ENCODE measurements at regions of chr6 and their contacts with region 1.

Region 1: DNA sequence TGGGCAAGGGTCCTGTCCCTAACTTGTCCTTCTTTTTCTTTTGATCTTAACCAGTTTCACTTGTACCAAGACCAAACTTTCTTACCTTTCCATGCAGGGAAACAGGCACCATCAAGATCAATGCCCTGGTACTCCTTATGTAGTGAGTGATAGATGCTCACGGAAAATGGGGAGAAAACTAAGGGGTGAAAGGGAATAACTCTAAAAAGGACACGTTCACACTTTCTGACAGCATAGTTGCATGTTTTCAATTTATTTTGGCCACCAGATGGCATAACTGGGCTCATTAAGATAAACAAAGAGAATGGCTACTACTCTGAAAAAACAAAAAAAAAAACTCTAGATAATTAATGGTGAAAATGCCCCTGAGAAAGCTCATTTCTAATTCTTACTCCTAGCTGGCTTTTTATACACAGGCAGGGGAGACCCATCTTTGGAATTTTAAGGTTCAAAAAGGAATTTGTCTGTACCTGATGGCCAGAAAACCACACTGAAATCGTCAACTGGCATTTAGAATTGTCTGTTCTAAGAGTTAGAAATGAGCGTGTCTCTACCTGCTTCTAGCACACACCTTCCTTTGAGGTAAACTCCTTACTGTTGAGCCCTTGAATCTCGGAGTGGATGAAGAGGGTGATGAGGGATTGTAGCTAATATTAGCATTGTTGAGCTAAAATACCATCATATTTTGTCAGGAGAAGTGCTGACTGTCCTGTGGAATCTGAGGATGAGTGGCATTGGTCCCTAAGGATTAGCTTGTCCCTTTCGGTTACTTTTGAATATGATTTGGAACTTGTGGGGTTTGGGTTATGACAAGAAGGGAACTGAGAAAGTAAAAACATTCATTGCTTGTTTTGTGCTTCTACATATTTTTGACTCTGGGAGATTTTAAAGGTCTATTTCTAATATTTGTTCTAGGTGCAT is 62.2 kb upstream of the DDR1 start:
- DNase-seq: no peak
- ATAC-seq: peak; percentile 20; the same call in 1 of the 2 replicates
- H3K4me3 ChIP-seq: no peak overlapping the region
- H3K27ac ChIP-seq: peak overlapping the region; percentile 97
- H3K4me1 ChIP-seq: peaks cover 58 to 72% of the 10 kb centered on the region in 2 experiments
- H3K27me3 ChIP-seq: no peaks in the 10 kb centered on the region
- CTCF ChIP-seq: peak in 2 of 3 experiments; percentile 44 to 57; a peak in 3 of 6 replicates
- POLR2A ChIP-seq: no peak
- RAD21 ChIP-seq: no peak

Region 2: GRCh38 chr6:30672445-30673253 is 149.5 kb before region 1 on chr6 and contains the start of gene DHX16:
- CTCF ChIA-PET with region 1: no interaction called
- POLR2A ChIA-PET with region 1: no interaction called
- RAD21 ChIA-PET with region 1: no interaction called
- intact Hi-C with region 1: no loop called
- DNase-seq: peak; percentile 99
- ATAC-seq: peak; percentile 85
- H3K4me3 ChIP-seq: peak within 1 kb of the TSS; percentile 98
- H3K27ac ChIP-seq: peak within 1 kb of the TSS; percentile 57
- H3K4me1 ChIP-seq: peaks cover 4 to 22% of the 10 kb centered on the region in 2 experiments; a peak in 3 of 4 replicates
- H3K27me3 ChIP-seq: no peaks in the 10 kb centered on the region
- CTCF ChIP-seq: peak; percentile 84 to 92 (median 88)
- POLR2A ChIP-seq: peak; percentile 42
- RAD21 ChIP-seq: peak; percentile 80
- total RNA-seq, gene DHX16: 46.0 TPM

Region 3: DNA sequence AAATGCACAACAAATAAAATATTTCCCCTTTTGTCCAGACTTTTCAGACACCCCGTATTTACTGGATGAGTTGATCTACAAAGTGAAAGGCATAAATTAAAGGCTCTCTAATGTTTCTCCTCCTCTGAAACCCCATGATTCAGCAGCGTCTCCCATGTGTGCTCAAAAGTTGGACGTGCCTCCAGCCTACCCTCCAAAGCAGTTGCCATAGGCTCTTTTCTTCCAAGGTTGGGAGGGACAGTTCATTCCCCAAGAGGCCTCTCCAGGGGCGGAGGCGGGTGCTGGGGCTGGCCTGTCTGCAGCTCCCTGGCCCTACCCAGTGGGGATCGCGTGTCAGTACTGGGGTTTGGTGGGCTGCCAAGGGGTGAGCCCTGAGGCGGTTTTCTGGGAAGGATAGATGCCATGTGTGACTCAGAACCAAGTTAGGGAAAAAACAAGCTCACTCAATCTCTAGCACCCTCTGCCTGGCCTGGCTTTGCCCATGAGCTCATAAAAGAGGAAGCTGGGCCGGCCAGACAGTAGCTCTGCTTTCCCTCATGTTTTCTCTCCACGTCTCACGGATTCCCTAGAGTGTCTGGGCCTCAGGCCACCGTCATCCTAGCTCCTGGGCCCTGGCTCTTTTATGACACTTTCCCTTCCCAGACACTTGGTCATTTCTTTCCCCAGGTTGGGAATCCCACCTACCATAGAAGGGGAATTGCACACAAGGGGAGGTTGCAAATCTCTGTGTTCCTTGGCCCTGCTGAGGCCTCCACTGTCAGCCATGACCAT is 69.8 kb before region 1 on chr6:
- CTCF ChIA-PET with region 1: no interaction called
- POLR2A ChIA-PET with region 1: interaction called, 12 read pairs
- RAD21 ChIA-PET with region 1: no interaction called
- intact Hi-C with region 1: no loop called
- DNase-seq: peak; percentile 99
- ATAC-seq: peak; percentile 82
- H3K4me3 ChIP-seq: no peak overlapping the region
- H3K27ac ChIP-seq: peak overlapping the region; percentile 96
- H3K4me1 ChIP-seq: peaks cover 76 to 97% of the 10 kb centered on the region in 2 experiments
- H3K27me3 ChIP-seq: no peaks in the 10 kb centered on the region
- CTCF ChIP-seq: no peak
- POLR2A ChIP-seq: no peak
- RAD21 ChIP-seq: no peak

Region 4: GRCh38 chr6:30806581-30807183 is 15.4 kb before region 1 on chr6:
- CTCF ChIA-PET with region 1: interaction called, 3 read pairs
- POLR2A ChIA-PET with region 1: interaction called, 94 read pairs
- RAD21 ChIA-PET with region 1: no interaction called
- intact Hi-C with region 1: no loop called
- DNase-seq: peak; percentile 78
- ATAC-seq: peak; percentile 26
- H3K4me3 ChIP-seq: peak overlapping the region in 1 of 2 experiments; percentile 27; a peak in 1 of 4 replicates
- H3K27ac ChIP-seq: peak overlapping the region; percentile 69
- H3K4me1 ChIP-seq: peaks cover 55 to 78% of the 10 kb centered on the region in 2 experiments
- H3K27me3 ChIP-seq: no peaks in the 10 kb centered on the region
- CTCF ChIP-seq: no peak
- POLR2A ChIP-seq: peak; percentile 99
- RAD21 ChIP-seq: no peak

Region 5: GRCh38 chr6:31068669-31069340 is 246.7 kb after region 1 on chr6:
- CTCF ChIA-PET with region 1: interaction called, 26 read pairs
- POLR2A ChIA-PET with region 1: interaction called, 3 read pairs
- RAD21 ChIA-PET with region 1: interaction called in 1 of 2 experiments, 4 read pairs
- intact Hi-C with region 1: no loop called
- DNase-seq: peak; percentile 81
- ATAC-seq: peak; percentile 94
- H3K4me3 ChIP-seq: no peak overlapping the region
- H3K27ac ChIP-seq: no peak overlapping the region
- H3K4me1 ChIP-seq: peaks cover 4 to 14% of the 10 kb centered on the region in 2 experiments; a peak in 3 of 4 replicates
- H3K27me3 ChIP-seq: no peaks in the 10 kb centered on the region
- CTCF ChIP-seq: peak; percentile 88 to 92 (median 91)
- POLR2A ChIP-seq: no peak
- RAD21 ChIP-seq: peak; percentile 82

Region 6: DNA sequence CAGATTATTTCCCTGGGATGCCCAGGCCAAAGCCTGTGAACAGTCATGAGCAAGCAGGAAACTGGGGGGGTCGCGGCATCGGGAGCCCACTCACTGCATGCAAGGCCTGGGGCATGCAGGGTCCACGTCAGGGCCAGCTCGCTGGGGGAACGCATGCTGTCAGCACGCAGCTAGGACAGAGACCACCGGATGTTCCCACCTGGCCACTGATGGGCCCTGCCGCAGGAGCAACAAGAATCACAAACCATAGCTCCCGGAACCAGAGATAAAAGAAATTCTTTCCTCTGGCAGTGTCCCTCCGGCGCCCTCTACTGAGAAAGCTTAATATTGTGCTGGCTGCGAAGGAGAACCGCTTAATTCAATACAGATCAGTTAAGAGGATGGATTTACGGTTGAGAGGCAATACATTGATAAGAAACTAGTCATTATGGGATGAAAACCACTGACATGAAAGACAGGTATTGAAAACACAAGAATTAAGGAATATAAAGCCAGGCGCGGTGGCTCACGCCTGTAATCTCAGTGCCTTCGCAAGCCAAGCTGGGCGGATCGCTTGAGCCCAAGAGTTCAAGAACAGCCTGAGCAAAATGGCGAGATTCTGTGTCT is 257.6 kb after region 1 on chr6:
- CTCF ChIA-PET with region 1: interaction called, 28 read pairs
- POLR2A ChIA-PET with region 1: interaction called, 3 read pairs
- RAD21 ChIA-PET with region 1: interaction called in 1 of 2 experiments, 4 read pairs
- intact Hi-C with region 1: no loop called
- DNase-seq: peak; percentile 38
- ATAC-seq: peak; percentile 78
- H3K4me3 ChIP-seq: no peak overlapping the region
- H3K27ac ChIP-seq: no peak overlapping the region
- H3K4me1 ChIP-seq: peaks cover 0 to 18% of the 10 kb centered on the region in 2 experiments; a peak in 2 of 4 replicates
- H3K27me3 ChIP-seq: no peaks in the 10 kb centered on the region
- CTCF ChIP-seq: peak; percentile 79 to 90 (median 86)
- POLR2A ChIP-seq: no peak
- RAD21 ChIP-seq: peak; percentile 81

Measured in HCT116 (cell line).